PC-3 (cell line): ENCODE measurements at regions of chr4 and their contacts with region 1.

Region 1: DNA sequence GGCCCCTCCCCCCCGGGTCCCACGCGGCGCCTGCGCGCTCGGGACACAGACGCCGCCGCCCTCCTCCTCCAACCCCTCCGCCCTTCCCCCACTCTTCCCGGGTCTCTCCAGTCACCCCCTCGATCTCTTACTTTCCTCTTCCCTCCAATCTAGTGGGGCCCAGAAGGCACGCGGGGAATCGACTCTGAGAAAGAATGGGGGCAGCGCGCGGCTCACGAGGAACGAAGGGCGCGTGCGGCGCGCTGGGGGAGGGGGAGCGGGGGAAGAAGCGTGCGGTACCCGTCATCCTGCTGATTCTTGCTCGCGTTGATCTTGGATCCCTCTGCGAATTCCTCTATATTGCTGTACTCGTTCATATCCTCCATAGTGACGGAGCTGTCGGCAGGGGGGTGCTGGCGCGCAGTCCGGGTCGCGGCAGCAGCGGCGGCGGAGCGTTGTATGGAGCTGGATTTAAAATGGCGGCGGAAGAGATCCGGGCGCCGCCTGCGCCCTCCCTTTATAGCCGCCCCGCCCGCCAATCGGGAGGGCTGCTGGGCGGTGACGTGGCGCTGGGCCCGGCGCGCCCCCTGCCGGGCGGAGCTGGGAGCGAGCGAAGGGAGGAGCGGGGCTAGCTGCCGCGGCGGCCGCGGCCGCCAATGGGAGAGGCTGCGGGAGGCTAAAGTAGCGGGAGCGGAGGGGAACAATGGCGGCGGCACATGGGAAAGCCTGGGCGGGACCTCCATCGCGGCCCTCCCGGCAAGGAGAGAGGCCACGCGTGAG is 1.1 kb downstream of the HNRNPDL start:
- DNase-seq: peak; percentile 91
- ATAC-seq: peak; percentile 53
- H3K4me3 ChIP-seq: peak overlapping the region; percentile 97
- H3K27ac ChIP-seq: peak overlapping the region; percentile 84
- H3K4me1 ChIP-seq: peaks cover 45% of the 10 kb centered on the region
- H3K27me3 ChIP-seq: no peaks in the 10 kb centered on the region
- CTCF ChIP-seq: peak; percentile 70

Region 2: DNA sequence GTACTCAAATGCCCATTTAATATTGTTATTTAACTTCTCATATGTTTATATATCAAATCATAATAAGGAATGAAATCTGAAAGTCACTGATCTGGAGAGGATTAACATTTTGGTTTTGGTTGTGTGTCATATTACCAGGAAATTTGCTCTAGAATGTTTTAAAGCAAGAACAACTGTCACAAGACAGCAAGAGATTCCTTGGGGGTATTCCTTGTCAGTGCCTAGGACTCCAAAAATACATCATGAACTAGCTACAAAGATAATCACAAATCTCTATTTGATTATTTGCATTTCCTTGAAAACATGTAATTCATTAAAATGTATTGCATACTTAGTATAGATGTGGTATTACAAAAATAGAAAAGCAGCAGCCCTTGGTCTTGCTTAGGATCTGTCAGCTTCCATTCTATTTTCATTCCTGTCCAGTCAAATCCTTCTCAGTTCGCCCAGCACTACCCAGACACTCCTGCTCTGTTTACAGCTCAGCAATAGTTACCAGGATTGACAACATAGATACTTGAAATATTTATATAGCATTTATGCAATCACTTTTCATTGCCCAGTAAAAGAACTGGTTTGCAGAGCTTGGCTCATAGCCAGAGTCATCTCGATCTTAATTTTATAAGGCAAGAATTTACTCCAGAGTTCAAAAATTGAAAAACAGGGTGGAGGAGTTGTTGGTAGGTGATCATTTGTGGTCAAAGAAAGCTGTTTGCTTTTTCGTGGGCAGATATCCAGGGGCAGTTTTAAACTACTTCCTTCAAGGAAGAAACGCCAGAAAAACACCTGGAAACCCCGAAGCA is 1407.8 kb before region 1 on chr4:
- CTCF ChIA-PET with region 1: no interaction called
- POLR2A ChIA-PET with region 1: no interaction called
- intact Hi-C with region 1: loop called (anchors 10 kb)
- DNase-seq: peak; percentile 94
- ATAC-seq: peak; percentile 76
- H3K4me3 ChIP-seq: peak overlapping the region; percentile 26; the same call in 1 of the 2 replicates
- H3K27ac ChIP-seq: peak overlapping the region; percentile 96
- H3K4me1 ChIP-seq: peaks cover 44% of the 10 kb centered on the region
- H3K27me3 ChIP-seq: no peaks in the 10 kb centered on the region
- CTCF ChIP-seq: no peak

Region 3: DNA sequence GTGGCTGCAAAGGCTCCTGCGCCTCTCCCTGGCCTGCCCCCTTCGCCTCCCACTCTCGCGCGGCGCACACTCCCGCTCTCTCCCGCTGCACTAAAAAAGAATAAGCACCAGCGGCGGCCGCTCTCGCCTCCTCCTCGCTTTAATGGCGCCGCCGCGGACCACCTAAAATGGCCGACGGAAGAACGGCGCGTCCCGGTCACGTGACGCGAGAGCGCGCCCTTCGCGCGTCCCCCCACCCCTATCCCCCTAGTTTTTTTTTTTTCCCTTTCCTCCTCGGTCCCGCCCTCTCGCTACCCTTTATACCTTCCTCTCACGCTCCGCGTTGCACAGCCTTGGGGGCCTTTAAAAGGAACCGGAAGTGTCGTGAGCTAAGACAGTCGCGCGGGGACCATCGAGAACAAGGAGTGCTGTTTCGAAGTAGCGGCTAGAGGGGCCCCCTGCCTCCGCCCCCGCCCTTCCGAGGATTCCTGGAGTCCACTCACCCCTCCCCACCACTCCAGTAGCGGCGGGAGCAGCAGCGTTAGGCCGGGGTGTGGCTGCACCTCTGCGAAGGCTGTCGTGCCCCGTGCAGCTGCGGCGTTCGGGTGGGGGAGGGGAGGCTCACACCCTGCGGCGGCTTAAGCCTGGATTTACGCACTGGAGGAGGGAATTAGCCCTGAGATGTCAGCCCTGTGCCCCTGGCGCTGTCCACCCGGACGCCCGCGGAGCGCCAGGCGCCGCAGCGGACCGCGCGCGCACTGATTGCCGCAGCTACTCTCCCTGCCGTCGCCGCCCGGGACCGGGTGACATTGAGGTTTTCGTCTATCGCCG is 55.1 kb before region 1 on chr4 and contains the start of gene HNRNPD:
- CTCF ChIA-PET with region 1: no interaction called
- POLR2A ChIA-PET with region 1: interaction called, 8 read pairs
- intact Hi-C with region 1: loop called (anchors 1 kb)
- DNase-seq: peak; percentile 96
- ATAC-seq: peak; percentile 89
- H3K4me3 ChIP-seq: peak within 1 kb of the TSS; percentile 97
- H3K27ac ChIP-seq: peak within 1 kb of the TSS; percentile 87
- H3K4me1 ChIP-seq: peaks cover 19% of the 10 kb centered on the region
- H3K27me3 ChIP-seq: no peaks in the 10 kb centered on the region
- CTCF ChIP-seq: no peak
- total RNA-seq, gene HNRNPD: 86.4 and 136 TPM in 2 replicates

Region 4: DNA sequence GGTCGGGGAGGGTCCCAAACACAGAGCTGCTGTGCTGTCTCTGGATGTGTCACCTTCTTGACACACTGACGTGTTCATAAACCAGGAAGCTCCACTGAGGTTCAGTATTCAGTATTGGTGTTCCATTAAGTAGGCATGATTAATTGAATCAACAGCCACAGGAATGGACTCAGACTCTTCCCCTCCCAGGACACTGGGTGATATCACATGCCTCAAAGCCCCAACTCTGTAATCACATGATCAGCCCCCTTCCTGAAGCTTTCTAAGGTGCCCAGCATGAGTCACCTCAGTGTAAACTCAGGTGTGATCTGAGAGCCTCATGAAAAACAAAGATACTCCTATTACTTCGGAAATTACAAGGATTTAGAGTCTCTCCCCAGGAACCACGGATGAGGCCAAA is 34.2 kb before region 1 on chr4:
- CTCF ChIA-PET with region 1: no interaction called
- POLR2A ChIA-PET with region 1: interaction called, 8 read pairs
- intact Hi-C with region 1: loop called (anchors 2 kb)
- DNase-seq: peak; percentile 93
- ATAC-seq: peak; percentile 89
- H3K4me3 ChIP-seq: peak overlapping the region; percentile 52
- H3K27ac ChIP-seq: peak overlapping the region; percentile 98
- H3K4me1 ChIP-seq: peaks cover 21% of the 10 kb centered on the region
- H3K27me3 ChIP-seq: no peaks in the 10 kb centered on the region
- CTCF ChIP-seq: no peak

Region 5: DNA sequence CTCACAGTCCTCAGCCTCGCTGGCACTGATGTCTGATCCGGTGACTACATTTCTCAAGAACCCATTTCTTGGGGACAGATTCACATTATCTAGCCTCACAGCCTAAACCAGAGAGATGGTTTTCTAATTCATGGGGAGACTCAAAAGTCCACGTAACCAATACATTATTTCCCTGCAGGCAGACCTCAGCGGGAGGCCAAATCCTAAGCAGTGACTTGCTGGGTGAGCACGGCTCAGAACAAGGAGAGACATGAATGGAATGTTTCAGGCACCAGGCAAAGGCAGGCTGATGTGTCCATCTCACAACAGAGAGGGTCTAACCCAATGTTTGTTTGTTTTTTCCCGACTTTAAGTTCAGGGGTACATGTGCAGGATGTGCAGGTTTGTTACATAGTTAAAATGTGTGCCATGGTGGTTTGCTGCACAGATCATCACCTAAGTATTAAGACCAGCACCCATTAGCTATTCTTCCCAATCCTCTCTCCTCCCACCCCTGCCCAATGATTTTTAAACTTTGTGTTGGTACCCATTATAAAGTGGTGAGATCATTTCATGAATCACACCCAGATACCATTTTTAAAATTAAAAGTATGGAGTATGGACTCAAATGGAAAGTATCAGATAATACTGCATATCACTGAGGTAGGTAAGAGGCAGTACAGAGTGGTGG is 316.2 kb after region 1 on chr4:
- CTCF ChIA-PET with region 1: no interaction called
- POLR2A ChIA-PET with region 1: no interaction called
- intact Hi-C with region 1: no loop called
- DNase-seq: no peak
- ATAC-seq: no peak
- H3K4me3 ChIP-seq: no peak overlapping the region
- H3K27ac ChIP-seq: no peak overlapping the region
- H3K4me1 ChIP-seq: no peaks in the 10 kb centered on the region
- H3K27me3 ChIP-seq: no peaks in the 10 kb centered on the region
- CTCF ChIP-seq: no peak

Region 6: DNA sequence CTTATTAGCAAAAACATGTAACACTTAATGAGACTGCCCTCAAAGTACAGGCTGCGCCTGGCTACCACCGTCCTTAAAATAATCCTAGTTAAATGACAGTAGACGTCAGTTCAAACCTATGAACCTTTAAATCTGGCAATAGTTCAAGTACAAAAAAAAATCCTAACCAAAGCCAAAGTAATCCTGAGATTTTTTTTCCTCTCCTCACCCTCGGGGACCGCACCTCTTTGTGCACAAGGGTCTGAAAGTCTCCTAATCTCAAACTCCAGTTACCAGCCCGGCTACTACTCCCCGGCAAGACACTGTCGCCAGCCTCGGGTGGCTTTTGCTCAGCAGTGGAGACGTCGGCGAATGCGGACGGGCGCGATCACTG is 461.4 kb after region 1 on chr4:
- CTCF ChIA-PET with region 1: no interaction called
- POLR2A ChIA-PET with region 1: interaction called, 13 read pairs
- intact Hi-C with region 1: no loop called
- DNase-seq: peak; percentile 6
- ATAC-seq: no peak
- H3K4me3 ChIP-seq: peak overlapping the region; percentile 100
- H3K27ac ChIP-seq: peak overlapping the region; percentile 96
- H3K4me1 ChIP-seq: peaks cover 31% of the 10 kb centered on the region
- H3K27me3 ChIP-seq: no peaks in the 10 kb centered on the region
- CTCF ChIP-seq: no peak

Region 7: DNA sequence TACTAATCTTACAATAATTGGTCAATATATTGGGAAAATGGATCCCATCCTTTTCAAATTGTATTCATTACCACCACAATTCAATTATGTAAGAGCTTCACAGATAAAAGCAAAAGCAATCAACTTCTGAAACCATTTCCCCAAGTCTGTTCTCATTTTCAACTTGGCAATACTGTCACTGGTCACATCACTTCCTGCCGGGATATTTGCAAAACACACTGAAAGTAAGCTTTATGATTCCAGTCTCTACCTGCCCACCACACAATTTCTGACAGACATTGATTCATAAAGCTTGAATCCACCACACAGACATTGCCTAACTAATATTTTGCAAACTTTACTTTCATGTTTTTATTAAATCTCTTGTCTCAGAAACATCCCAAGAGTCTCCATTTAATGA is 527.9 kb after region 1 on chr4:
- CTCF ChIA-PET with region 1: no interaction called
- POLR2A ChIA-PET with region 1: no interaction called
- intact Hi-C with region 1: no loop called
- DNase-seq: no peak
- ATAC-seq: no peak
- H3K4me3 ChIP-seq: no peak overlapping the region
- H3K27ac ChIP-seq: no peak overlapping the region
- H3K4me1 ChIP-seq: no peaks in the 10 kb centered on the region
- H3K27me3 ChIP-seq: no peaks in the 10 kb centered on the region
- CTCF ChIP-seq: no peak